Breast epithelium (tissue), 4 donors: ENCODE measurements at regions of chr12 and their contacts with region 1.

Region 1: DNA sequence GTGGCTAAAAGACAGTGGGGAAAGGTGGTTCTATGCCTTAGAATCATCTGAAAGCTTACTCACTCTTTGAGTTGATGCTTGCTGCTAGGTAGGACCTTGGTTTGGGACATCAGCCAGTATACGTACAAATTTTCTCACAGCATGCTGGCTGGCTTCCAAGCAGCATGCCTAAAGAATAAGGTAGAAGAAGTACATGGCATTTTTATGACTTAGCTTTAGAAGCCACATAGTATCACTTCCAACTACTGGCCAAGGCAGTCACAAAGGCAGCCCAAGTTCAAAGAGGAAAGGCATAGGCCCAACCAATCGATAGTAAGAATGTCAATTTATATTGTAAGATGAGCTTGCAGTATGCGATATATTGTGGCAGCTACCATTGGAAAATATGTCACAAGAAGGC is 284.2 kb upstream of the CAND1 start:
- DNase-seq: no peak
- H3K4me3 ChIP-seq: no peak overlapping the region
- H3K27ac ChIP-seq: no peak overlapping the region
- H3K4me1 ChIP-seq: no peaks in the 10 kb centered on the region
- H3K27me3 ChIP-seq: no peaks in the 10 kb centered on the region
- CTCF ChIP-seq: no peak
- POLR2A ChIP-seq: no peak

Region 2: GRCh38 chr12:68792952-68793835 is 1808.2 kb after region 1 on chr12:
- intact Hi-C with region 1: loop called (anchors 10 kb)
- DNase-seq: no peak
- H3K4me3 ChIP-seq: no peak overlapping the region
- H3K27ac ChIP-seq: peak overlapping the region in 1 of 2 donors; percentile 40
- H3K4me1 ChIP-seq: no peaks in the 10 kb centered on the region
- H3K27me3 ChIP-seq: no peaks in the 10 kb centered on the region
- CTCF ChIP-seq: no peak
- POLR2A ChIP-seq: no peak